Heart right ventricle (tissue), 16 donors: ENCODE measurements at regions of chrX and their contacts with region 1.

Region 1: GRCh38 chrX:1154001-1154400 is 58.4 kb downstream of the CRLF2 start:
- DNase-seq: no peak
- ATAC-seq: no peak
- H3K4me3 ChIP-seq: no peak overlapping the region
- H3K27ac ChIP-seq: no peak overlapping the region
- H3K4me1 ChIP-seq: no peaks in the 10 kb centered on the region
- H3K27me3 ChIP-seq: peaks cover 0 to 32% (median 14%) of the 10 kb centered on the region in 7 donors
- CTCF ChIP-seq: no peak

Region 2: DNA sequence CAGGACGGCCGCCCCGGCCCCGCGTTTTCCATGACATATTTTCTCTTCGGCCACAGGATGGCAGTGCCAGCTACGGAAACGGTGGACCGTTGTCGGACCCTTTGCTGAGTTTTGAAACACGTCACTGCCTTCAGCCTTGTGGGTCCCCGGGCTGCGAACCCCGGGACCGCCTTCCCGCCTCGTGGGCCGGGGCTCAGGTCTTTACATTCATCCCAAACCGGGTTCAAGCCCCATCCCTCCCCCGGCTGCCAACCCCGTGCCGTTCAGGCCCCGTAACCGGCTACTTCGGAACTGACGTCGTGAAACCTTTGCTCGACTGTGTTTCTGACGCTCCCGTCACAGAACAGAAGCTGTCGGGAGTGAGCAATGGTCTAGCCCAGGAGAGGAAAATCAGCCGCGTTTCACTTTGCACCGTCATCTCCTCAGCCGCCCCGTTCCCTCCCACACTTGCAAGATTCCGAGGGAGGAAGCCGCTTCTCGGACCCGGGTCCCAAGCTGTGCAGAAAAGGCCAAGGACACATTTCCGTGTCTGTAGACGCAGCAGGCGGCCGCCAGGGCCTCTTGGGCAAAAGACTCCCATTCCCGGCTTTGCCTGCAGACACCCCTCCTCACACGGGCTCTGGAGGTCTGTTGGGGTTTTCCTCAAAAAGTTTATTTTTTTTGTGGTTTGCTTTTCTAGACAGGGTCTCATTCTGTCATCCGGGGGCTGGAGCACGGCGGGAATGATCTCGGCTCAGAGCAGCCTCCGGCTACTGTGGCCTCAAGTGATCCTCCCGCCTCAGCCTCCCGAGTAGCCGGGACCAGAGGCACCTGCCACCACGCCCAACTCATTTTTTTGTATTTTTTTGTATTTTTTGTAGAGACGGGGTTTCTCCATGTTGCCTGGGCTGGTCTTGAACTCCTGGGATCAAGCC is 725.9 kb before region 1 on chrX:
- intact Hi-C with region 1: loop called in 1 of 10 experiments (anchors 10 kb)
- DNase-seq: no peak
- ATAC-seq: no peak
- H3K4me3 ChIP-seq: peak overlapping the region in 3 of 10 donors; percentile 13 to 36 (median 29)
- H3K27ac ChIP-seq: no peak overlapping the region
- H3K4me1 ChIP-seq: peaks cover 0 to 6% (median 0%) of the 10 kb centered on the region in 9 donors
- H3K27me3 ChIP-seq: peaks cover 0 to 44% (median 34%) of the 10 kb centered on the region in 7 donors
- CTCF ChIP-seq: peak in 4 of 9 donors; percentile 7 to 29 (median 18)

Region 3: GRCh38 chrX:1212532-1212931 is 58.5 kb after region 1 on chrX and contains the start of gene CRLF2:
- intact Hi-C with region 1: no loop called
- DNase-seq: no peak
- ATAC-seq: no peak
- H3K4me3 ChIP-seq: no peak within 1 kb of the TSS
- H3K27ac ChIP-seq: no peak within 1 kb of the TSS
- H3K4me1 ChIP-seq: peaks cover 0 to 7% (median 0%) of the 10 kb centered on the region in 9 donors
- H3K27me3 ChIP-seq: peaks cover 0 to 20% (median 0%) of the 10 kb centered on the region in 7 donors
- CTCF ChIP-seq: no peak
- total RNA-seq, gene CRLF2: 0.14 to 0.51 (median 0.39) TPM in 4 of 10 donors, not detected in the others